ENCODE measurements at regions of chr1 and their contacts with region 1.

Region 1: GRCh38 chr1:110407260-110408210 is at the start of gene LAMTOR5:
- DNase-seq: peak; percentile 92 to 94
- H3K4me3 ChIP-seq: peak within 1 kb of the TSS; percentile 64 to 90 (median 85)
- H3K27ac ChIP-seq: peak within 1 kb of the TSS; percentile 76 to 95 (median 94)
- H3K4me1 ChIP-seq: peaks cover 12 to 18% of the 10 kb centered on the region in 2 donors
- H3K27me3 ChIP-seq: no peaks in the 10 kb centered on the region
- CTCF ChIP-seq: peak in 2 of 6 experiments; percentile 8 to 26
- POLR2A ChIP-seq: peak in 1 of 2 donors; percentile 89
- total RNA-seq, gene LAMTOR5: 46.1 to 119 (median 80.2) TPM

Region 2: DNA sequence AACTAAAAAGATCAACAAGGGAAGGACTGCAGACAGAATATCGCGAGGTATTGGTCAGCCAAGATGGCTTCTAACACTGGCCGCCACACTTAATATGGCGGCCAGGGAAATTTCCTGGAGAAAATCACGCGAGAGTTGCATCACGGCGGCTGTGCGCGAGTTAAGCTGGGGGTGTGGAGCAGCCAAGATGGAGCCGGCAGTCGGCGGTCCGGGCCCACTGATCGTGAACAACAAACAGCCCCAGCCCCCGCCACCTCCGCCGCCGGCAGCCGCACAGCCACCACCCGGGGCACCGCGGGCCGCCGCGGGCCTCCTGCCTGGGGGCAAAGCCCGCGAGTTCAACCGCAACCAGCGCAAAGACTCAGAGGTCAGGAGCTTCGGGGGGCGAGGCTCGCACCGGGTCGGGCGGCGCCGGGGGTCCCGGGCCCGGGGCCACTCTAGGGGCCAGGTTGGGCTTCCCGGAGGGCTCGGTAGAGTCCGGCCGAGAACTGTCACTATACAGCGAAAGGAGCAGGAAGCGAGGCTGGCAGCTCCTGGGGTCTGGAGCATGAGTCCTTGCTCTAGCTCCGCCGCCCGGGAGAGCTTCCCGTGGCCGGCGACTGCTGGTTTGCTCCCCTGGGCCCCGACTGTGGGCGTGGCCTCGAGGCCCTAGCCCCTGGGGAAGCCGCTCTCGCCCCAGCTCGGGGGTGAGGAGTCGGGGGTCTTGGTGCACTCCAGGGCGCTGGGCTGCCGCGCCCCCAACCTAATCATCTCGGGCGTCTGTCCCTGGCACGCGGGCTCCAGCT is 372.9 kb before region 1 on chr1 and contains the start of gene STRIP1:
- intact Hi-C with region 1: loop called (anchors 10 kb)
- DNase-seq: peak; percentile 91 to 93
- H3K4me3 ChIP-seq: peak within 1 kb of the TSS; percentile 52 to 99 (median 68)
- H3K27ac ChIP-seq: peak within 1 kb of the TSS; percentile 29 to 90 (median 81)
- H3K4me1 ChIP-seq: peaks cover 13% of the 10 kb centered on the region in 2 donors
- H3K27me3 ChIP-seq: no peaks in the 10 kb centered on the region
- CTCF ChIP-seq: no peak
- POLR2A ChIP-seq: peak; percentile 7 to 79
- total RNA-seq, gene STRIP1: 36.2 to 63.4 (median 45.2) TPM

Region 3: GRCh38 chr1:110209715-110210603 is 197.6 kb before region 1 on chr1 and contains the start of gene KCNC4:
- intact Hi-C with region 1: loop called (anchors 5 kb)
- DNase-seq: peak; percentile 82 to 85
- H3K4me3 ChIP-seq: peak within 1 kb of the TSS; percentile 17 to 73 (median 43)
- H3K27ac ChIP-seq: peak within 1 kb of the TSS; percentile 65 to 83 (median 67)
- H3K4me1 ChIP-seq: peaks cover 9 to 27% of the 10 kb centered on the region in 2 donors
- H3K27me3 ChIP-seq: no peaks in the 10 kb centered on the region
- CTCF ChIP-seq: no peak
- POLR2A ChIP-seq: peak in 1 of 2 donors; percentile 51
- total RNA-seq, gene KCNC4: 3.8 to 12.5 (median 4.6) TPM

Region 4: GRCh38 chr1:110339407-110340206 is 67.9 kb before region 1 on chr1:
- intact Hi-C with region 1: loop called (anchors 5 kb)
- DNase-seq: peak; percentile 52 to 62
- H3K4me3 ChIP-seq: peak overlapping the region; percentile 58 to 85 (median 84)
- H3K27ac ChIP-seq: peak overlapping the region; percentile 64 to 87 (median 85)
- H3K4me1 ChIP-seq: peaks cover 34 to 50% of the 10 kb centered on the region in 2 donors
- H3K27me3 ChIP-seq: no peaks in the 10 kb centered on the region
- CTCF ChIP-seq: peak in 5 of 6 experiments; percentile 23 to 61 (median 35)
- POLR2A ChIP-seq: peak; percentile 52 to 85

Region 5: DNA sequence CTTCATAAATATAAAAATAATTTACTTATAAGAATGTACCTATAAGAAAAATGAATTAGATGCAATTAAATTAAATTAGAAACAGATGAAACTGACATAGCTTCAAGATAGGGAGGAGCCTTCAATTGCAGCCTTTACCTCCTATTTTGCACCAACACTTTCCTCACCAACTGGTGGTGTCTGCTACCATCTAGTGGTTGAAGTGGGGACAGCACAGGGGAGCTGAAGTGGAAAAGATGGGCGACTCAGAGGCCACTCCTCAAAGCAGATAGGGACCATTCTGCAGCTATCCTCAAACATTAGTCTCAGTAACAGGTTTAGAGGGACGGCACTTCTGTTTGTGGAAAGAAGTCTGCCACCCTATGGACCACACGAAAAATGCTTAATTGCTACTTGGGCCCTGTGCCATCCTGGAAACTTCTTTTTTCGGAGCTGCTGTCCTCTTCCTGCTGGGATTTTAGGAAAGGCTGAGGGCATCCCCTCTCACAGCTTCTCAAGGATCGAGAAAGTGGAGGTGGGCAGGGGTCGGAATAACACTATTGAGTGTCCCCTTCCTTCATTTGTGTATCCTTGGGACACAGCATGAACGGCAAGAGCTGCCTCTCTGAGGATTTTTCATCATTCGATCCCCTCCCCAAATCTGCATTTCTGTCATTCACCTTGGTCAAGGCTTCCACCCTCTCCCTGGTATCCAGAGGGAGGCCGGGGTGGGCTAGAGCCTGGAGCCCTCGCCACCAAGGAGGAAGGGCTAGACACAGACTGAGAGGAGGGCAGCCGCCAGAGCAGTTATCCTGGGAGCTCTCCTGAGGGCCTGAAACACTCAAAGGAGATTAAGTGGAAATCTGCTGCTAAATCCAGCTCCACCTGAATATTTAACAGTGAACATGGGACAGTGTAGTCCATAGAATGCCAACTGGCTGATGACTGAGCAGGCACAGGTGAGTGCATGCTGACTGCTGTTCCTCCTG is 53.0 kb after region 1 on chr1:
- intact Hi-C with region 1: loop called (anchors 2 kb)
- DNase-seq: peak; percentile 74 to 80
- H3K4me3 ChIP-seq: no peak overlapping the region
- H3K27ac ChIP-seq: no peak overlapping the region
- H3K4me1 ChIP-seq: no peaks in the 10 kb centered on the region
- H3K27me3 ChIP-seq: no peaks in the 10 kb centered on the region
- CTCF ChIP-seq: peak; percentile 86 to 97 (median 92)
- POLR2A ChIP-seq: no peak